HEK293 (cell line): ENCODE measurements at regions of chrX and their contacts with region 1.

Region 1: GRCh38 chrX:70133303-70134115 is at the start of gene IGBP1:
- H3K4me3 ChIP-seq: peak within 1 kb of the TSS; percentile 61
- H3K27ac ChIP-seq: peak within 1 kb of the TSS; percentile 69
- H3K4me1 ChIP-seq: no peaks in the 10 kb centered on the region; the same call in 1 of the 2 replicates
- CTCF ChIP-seq: peak; percentile 97

Region 2: GRCh38 chrX:69412661-69413060 is 720.8 kb before region 1 on chrX:
- CTCF ChIA-PET with region 1: no interaction called
- POLR2A ChIA-PET with region 1: no interaction called
- H3K4me3 ChIP-seq: no peak overlapping the region
- H3K27ac ChIP-seq: no peak overlapping the region
- H3K4me1 ChIP-seq: no peaks in the 10 kb centered on the region
- CTCF ChIP-seq: no peak

Region 3: GRCh38 chrX:69493193-69493592 is 640.3 kb before region 1 on chrX:
- CTCF ChIA-PET with region 1: interaction called, 11 read pairs
- POLR2A ChIA-PET with region 1: no interaction called
- H3K4me3 ChIP-seq: no peak overlapping the region
- H3K27ac ChIP-seq: no peak overlapping the region
- H3K4me1 ChIP-seq: no peaks in the 10 kb centered on the region
- CTCF ChIP-seq: peak; percentile 49

Region 4: GRCh38 chrX:69795702-69796101 is 337.8 kb before region 1 on chrX:
- CTCF ChIA-PET with region 1: no interaction called
- POLR2A ChIA-PET with region 1: no interaction called
- H3K4me3 ChIP-seq: no peak overlapping the region
- H3K27ac ChIP-seq: no peak overlapping the region
- H3K4me1 ChIP-seq: no peaks in the 10 kb centered on the region
- CTCF ChIP-seq: no peak

Region 5: DNA sequence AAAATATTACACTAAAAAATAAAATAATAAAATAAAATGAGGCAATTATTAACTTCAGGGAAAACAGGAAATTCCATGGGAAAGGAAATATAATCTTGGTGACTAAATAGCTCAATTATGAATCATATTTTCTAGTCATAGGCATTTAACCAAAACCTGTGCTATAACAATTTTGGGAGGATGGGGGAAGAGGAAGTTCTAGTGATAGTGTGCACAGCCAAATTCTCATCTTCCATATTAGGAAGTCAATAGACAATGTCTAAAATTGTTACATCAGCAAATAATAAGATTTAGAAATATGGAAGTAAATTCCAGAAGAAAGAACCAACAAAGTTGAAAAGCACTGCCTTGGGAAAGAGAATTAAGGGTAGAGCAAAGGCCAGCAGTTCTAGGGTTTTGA is 86.5 kb before region 1 on chrX:
- CTCF ChIA-PET with region 1: no interaction called
- POLR2A ChIA-PET with region 1: no interaction called
- H3K4me3 ChIP-seq: no peak overlapping the region
- H3K27ac ChIP-seq: no peak overlapping the region
- H3K4me1 ChIP-seq: no peaks in the 10 kb centered on the region
- CTCF ChIP-seq: no peak

Region 6: DNA sequence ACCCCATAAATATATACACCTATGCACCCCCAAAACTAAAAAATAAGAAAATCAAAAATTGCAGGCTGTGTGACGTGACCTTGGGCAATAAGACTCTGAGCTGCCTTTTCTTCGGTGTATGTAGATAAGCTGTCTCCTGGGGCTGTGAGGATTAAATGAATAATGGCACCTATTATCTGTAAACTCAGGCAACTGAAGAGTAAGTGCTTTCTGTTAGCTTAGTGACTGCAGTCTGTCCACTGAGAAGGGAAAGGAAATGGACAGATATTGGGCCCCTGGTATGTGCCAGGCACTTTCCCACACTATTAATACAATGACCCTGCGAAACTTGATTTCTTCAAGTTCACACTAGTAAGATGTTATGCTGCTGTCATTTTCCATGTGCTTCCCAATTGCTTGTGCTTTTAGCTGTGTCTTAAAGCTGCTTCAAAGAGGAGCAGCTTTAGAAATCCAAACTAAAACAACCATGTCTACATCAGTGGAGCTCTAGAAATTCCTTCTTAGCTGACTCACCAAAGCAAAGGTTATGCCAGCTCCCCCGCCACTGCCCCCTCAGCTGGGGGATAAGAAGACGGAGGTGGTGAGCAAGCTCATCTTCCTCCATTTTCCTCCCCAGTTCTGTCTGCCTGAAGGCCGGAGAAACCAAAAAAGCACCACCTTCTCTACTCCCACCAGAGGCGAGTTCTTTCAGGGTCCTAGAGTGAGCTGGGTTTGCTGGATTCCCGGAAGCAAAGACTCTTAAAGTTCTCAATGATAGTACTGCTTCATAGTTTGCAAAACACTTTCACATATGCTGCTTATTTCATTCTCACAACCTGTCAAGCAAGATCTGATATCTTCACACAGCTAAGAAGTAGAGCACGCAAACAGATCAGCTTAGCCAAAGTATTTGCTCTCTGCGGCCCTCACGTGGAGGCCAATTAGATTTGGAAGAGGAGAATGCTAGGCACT is 35.0 kb after region 1 on chrX:
- CTCF ChIA-PET with region 1: interaction called, 5 read pairs
- POLR2A ChIA-PET with region 1: interaction called, 18 read pairs
- H3K4me3 ChIP-seq: no peak overlapping the region
- H3K27ac ChIP-seq: no peak overlapping the region
- H3K4me1 ChIP-seq: no peaks in the 10 kb centered on the region
- CTCF ChIP-seq: no peak

Region 7: DNA sequence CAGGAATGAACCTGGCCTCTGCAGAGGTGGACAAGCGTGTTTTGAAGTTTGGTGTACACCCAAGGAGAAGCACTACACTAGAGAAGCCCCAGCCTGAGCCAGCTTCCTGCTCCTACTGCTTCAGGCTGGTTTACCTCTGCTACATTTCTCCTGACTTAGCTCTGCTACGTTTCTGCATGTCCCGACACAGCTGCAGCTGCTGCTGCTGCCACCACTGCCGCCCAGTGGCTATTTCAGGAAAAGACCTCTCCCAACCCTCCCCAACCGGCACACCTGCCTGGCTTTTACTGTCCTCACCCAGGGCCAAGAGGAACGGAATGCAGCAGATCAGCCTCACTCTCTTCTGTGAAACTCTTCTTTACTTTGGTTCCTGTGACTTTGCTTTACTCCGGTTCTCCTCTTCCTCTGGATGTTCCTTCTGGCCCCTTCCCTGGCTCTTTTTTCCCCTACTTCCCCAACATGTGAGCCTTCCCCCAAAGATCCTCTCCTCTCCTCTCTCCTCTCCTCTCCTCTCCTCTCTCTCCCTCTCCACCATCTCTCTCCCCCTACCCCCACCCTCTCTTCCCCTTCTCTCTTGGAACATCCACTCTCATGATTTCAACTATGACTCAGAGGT is 129.6 kb after region 1 on chrX:
- CTCF ChIA-PET with region 1: interaction called, 18 read pairs
- POLR2A ChIA-PET with region 1: interaction called, 3 read pairs
- H3K4me3 ChIP-seq: no peak overlapping the region
- H3K27ac ChIP-seq: no peak overlapping the region
- H3K4me1 ChIP-seq: no peaks in the 10 kb centered on the region
- CTCF ChIP-seq: peak; percentile 59; the same call in 1 of the 2 replicates

Region 8: GRCh38 chrX:70525733-70526132 is 392.2 kb after region 1 on chrX:
- CTCF ChIA-PET with region 1: no interaction called
- POLR2A ChIA-PET with region 1: no interaction called
- H3K4me3 ChIP-seq: no peak overlapping the region
- H3K27ac ChIP-seq: no peak overlapping the region; the same call in 1 of the 2 replicates
- H3K4me1 ChIP-seq: 0 out of 2 replicates have a peak, but pooled peaks cover 3% of the 10 kb centered on the region
- CTCF ChIP-seq: no peak